Panc1 (cell line): ENCODE measurements at regions of chr5 and their contacts with region 1.

Region 1: GRCh38 chr5:6681682-6682081 is 31.6 kb upstream of the TENT4A start:
- DNase-seq: no peak
- ATAC-seq: no peak
- H3K4me3 ChIP-seq: no peak overlapping the region
- H3K27ac ChIP-seq: no peak overlapping the region
- H3K4me1 ChIP-seq: no peaks in the 10 kb centered on the region
- H3K27me3 ChIP-seq: peaks cover 6% of the 10 kb centered on the region
- CTCF ChIP-seq: no peak

Region 2: GRCh38 chr5:6700074-6700684 is 18.5 kb after region 1 on chr5:
- CTCF ChIA-PET with region 1: interaction called, 17 read pairs
- POLR2A ChIA-PET with region 1: no interaction called
- in situ Hi-C with region 1: no loop called
- intact Hi-C with region 1: no loop called
- DNase-seq: no peak
- ATAC-seq: no peak
- H3K4me3 ChIP-seq: no peak overlapping the region
- H3K27ac ChIP-seq: no peak overlapping the region
- H3K4me1 ChIP-seq: no peaks in the 10 kb centered on the region
- H3K27me3 ChIP-seq: peaks cover 9% of the 10 kb centered on the region
- CTCF ChIP-seq: no peak

Region 3: DNA sequence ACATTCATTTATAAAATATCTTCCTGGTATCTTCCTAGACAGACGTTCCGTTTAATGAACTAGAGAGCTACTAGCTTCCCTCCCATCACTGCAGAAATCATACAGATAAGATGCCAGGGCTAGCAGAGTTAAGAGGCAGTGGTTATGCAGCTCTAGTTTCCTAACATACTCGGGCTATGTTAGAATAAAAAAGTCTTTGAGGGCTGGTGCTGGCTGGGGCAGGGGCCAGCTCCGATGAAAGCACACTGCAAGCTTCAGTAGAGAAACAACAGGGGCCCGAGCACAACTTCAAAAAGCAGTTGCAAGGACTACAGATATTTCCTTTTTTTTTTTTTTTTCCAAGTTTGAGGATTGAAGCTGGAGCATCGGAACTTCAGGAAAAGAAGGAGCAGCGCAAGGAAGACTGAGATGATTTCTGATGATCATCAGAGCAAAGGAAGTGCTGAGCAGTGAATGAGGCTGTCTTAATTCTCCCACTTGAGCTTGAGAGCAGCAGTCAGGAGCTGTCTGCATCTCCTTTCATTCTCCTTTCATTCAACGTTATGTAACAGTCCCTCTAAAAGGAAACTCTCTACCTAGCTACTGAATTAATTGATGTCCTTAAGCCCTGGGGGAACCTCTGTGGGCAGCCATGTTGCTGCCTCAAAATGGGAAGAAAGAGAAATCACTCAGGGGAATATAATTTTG is 666.6 kb after region 1 on chr5:
- CTCF ChIA-PET with region 1: no interaction called
- POLR2A ChIA-PET with region 1: no interaction called
- in situ Hi-C with region 1: no loop called
- intact Hi-C with region 1: no loop called
- DNase-seq: no peak
- ATAC-seq: no peak
- H3K4me3 ChIP-seq: no peak overlapping the region
- H3K27ac ChIP-seq: no peak overlapping the region
- H3K4me1 ChIP-seq: no peaks in the 10 kb centered on the region
- H3K27me3 ChIP-seq: no peaks in the 10 kb centered on the region
- CTCF ChIP-seq: no peak